ENCODE measurements at regions of chr6 and their contacts with region 1.

Region 1: GRCh38 chr6:119349323-119350042 is at the start of gene MAN1A1:
- DNase-seq: peak; percentile 48
- H3K4me3 ChIP-seq: peak within 1 kb of the TSS; percentile 72 to 97 (median 90)
- H3K27ac ChIP-seq: peak within 1 kb of the TSS; percentile 90 to 96 (median 92)
- H3K4me1 ChIP-seq: peaks cover 0 to 72% (median 12%) of the 10 kb centered on the region in 3 donors
- H3K27me3 ChIP-seq: peaks cover 0 to 5% (median 0%) of the 10 kb centered on the region in 4 donors
- CTCF ChIP-seq: no peak
- POLR2A ChIP-seq: peak in 3 of 4 donors; percentile 83 to 99 (median 95)
- total RNA-seq, gene MAN1A1: 6.3 to 92.3 (median 22.4) TPM

Region 2: GRCh38 chr6:119147101-119148053 is 202.1 kb before region 1 on chr6:
- intact Hi-C with region 1: loop called (anchors 10 kb)
- DNase-seq: no peak
- H3K4me3 ChIP-seq: no peak overlapping the region
- H3K27ac ChIP-seq: peak overlapping the region; percentile 47 to 58 (median 55)
- H3K4me1 ChIP-seq: peaks cover 13 to 28% (median 17%) of the 10 kb centered on the region in 3 donors
- H3K27me3 ChIP-seq: no peaks in the 10 kb centered on the region
- CTCF ChIP-seq: no peak
- POLR2A ChIP-seq: no peak

Measured in esophagus squamous epithelium (tissue), 5 donors.